ENCODE measurements at regions of chr17 and their contacts with region 1.

Region 1: GRCh38 chr17:28494445-28495188 is 11.5 kb upstream of the FOXN1 start:
- DNase-seq: peak; percentile 89
- H3K4me3 Mint-ChIP-seq: no peak overlapping the region
- H3K27ac Mint-ChIP-seq: no peak overlapping the region
- H3K4me1 Mint-ChIP-seq: no peaks in the 10 kb centered on the region
- H3K27me3 Mint-ChIP-seq: no peaks in the 10 kb centered on the region

Region 2: GRCh38 chr17:28295677-28296578 is 198.7 kb before region 1 on chr17:
- CTCF ChIA-PET with region 1: no interaction called
- intact Hi-C with region 1: no loop called
- DNase-seq: no peak
- H3K4me3 Mint-ChIP-seq: no peak overlapping the region
- H3K27ac Mint-ChIP-seq: peak overlapping the region; percentile 56
- H3K4me1 Mint-ChIP-seq: peaks cover 16% of the 10 kb centered on the region
- H3K27me3 Mint-ChIP-seq: peaks cover 4% of the 10 kb centered on the region

Region 3: DNA sequence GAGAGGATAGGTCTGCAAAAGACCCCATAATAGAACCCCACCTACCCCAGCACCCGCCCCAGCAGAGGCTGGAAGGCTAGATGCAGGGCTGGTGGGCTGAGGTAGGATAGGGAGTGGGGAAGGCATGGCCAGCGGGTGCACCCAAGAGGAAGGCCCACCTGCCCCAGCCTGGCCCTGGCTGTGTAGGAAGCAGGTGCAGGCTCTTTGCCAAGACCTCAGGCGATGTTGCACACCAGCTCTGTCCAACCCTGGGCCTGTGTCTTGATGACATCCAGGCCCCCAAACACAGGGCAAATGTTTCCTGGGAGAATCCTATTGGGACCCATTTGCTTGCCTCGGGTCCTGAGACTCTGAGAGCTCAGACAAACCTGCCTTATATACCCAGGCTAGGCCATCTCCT is 45.6 kb after region 1 on chr17:
- CTCF ChIA-PET with region 1: interaction called, 13 read pairs
- intact Hi-C with region 1: loop called (anchors 1 kb)
- DNase-seq: no peak
- H3K4me3 Mint-ChIP-seq: no peak overlapping the region
- H3K27ac Mint-ChIP-seq: no peak overlapping the region
- H3K4me1 Mint-ChIP-seq: no peaks in the 10 kb centered on the region
- H3K27me3 Mint-ChIP-seq: no peaks in the 10 kb centered on the region

Region 4: DNA sequence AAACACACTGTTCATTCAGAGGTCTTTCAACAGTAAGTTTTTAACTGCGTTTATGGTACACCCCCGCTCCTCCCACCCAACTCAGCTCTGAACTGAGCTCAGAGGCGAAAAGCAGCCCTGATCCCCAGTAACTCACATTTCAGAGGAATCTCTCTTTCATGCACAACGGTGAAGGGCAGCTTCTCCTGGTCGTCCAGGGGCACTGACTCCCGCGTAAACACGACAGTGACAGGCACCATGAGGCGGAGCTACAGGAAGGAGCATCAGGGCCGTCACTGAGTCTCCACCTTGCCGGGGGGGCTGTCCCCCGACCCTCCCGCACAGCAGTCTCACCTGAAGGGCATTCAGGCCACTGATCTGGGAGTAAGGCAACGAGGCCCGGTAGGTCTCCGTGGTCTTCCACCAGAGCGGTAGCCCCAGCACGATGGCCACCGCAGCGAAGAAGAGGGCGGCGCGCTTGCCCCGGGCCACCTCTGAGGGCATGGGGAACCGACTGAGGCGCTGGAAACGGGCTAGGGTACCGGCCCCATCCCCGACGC is 76.2 kb after region 1 on chr17:
- CTCF ChIA-PET with region 1: no interaction called
- intact Hi-C with region 1: no loop called
- DNase-seq: peak; percentile 69
- H3K4me3 Mint-ChIP-seq: peak overlapping the region; percentile 85
- H3K27ac Mint-ChIP-seq: peak overlapping the region; percentile 91
- H3K4me1 Mint-ChIP-seq: peaks cover 44% of the 10 kb centered on the region
- H3K27me3 Mint-ChIP-seq: no peaks in the 10 kb centered on the region

Region 5: DNA sequence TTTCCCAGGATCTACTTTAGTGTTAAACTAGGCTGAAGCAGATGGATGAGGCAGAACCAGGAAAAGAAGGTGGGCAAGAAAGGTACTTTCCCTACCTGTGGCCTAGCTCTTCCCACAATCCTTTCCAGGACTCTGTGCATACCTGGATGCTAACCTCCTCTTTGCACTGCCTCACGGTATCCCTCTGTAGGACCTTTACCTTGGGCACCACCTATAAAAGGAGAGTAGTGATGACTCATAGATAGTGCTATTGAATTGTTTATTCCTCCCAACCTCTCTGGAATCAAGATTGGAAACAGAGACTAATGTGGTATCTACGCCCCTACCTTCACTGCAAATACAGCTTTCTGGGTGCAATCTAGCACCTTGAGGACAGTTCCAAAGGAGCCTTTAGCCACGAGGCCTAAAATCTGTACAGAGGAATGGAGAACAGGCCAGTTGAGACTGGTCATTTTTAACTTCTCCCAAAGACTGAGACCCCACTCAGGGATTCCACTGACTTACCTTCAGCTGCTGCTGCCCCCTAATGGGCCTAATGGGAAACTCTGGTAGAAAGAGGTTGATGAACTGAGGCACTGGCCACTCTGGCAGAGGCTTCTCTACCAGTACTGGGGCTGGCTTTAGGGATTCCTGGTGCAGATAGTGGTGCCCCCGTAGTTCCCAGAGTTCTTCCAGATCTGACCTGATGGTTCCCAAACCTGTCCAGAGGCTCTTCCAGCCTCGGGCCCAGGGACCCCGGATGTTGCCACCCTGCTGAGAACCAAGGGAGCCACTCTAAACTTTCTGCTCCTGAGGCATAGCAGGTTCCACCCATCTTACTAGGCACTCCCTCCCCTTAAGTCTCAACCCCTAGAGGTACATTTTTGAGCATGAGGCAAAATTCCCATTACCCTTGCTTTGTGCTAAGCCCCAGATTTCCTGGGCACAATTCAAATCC is 118.6 kb after region 1 on chr17:
- CTCF ChIA-PET with region 1: interaction called, 5 read pairs
- intact Hi-C with region 1: loop called (anchors 1 kb)
- DNase-seq: peak; percentile 52
- H3K4me3 Mint-ChIP-seq: no peak overlapping the region
- H3K27ac Mint-ChIP-seq: no peak overlapping the region
- H3K4me1 Mint-ChIP-seq: peaks cover 3% of the 10 kb centered on the region
- H3K27me3 Mint-ChIP-seq: no peaks in the 10 kb centered on the region

Region 6: DNA sequence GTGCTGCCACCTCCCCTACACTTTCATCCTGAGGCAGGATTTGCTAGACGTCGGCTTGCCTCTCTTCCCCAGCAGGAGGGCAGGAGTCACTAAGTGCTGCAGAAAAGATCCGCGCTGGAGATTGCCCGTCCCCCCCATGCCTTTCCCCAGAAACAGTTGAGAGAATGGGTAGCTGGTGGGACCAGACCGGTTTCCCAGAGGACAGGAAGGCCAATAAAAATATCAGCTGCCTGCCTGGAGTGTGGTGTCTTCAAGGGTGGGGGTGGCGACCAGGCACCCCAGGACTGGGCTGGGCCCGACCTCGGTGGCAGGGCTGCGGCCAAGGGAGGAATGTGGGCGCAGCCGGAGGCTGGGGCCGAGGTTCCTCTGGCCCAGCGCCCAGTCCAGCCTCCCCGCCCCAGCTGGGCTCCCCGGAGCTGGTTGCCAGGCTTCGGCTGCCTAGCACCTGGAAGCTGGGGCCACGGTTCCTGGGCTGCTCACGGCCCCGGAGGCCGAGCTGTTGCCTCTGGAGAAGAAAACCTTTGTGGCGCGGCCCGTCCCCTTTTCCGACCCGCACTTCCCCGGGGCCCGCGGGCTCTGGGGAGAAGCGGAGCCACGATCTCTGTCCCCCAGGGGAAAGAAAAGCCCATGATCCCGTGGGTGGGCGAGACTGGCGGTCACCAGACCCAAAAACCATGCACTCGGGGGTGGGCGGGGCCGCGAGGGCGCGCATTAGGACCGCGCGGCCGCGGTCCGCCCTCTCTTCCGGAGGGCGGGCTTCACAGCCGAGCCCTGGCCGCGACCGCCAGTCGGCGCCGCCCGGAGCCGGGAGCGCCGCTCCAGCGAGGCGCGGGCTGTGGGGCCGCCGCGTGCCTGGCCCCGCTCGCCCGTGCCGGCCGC is 248.8 kb after region 1 on chr17 and contains the start of gene TRAF4:
- CTCF ChIA-PET with region 1: no interaction called
- intact Hi-C with region 1: no loop called
- DNase-seq: peak; percentile 74
- H3K4me3 Mint-ChIP-seq: peak within 1 kb of the TSS; percentile 91
- H3K27ac Mint-ChIP-seq: peak within 1 kb of the TSS; percentile 85
- H3K4me1 Mint-ChIP-seq: peaks cover 45% of the 10 kb centered on the region
- H3K27me3 Mint-ChIP-seq: no peaks in the 10 kb centered on the region
- total RNA-seq, gene TRAF4: 75.9 to 80.4 TPM

Measured in activated naive CD4-positive, alpha-beta T cell treated with anti-CD3 and anti-CD28 coated beads for 36 hours (primary cell).